ENCODE measurements at regions of chr17 and their contacts with region 1.

Region 1: DNA sequence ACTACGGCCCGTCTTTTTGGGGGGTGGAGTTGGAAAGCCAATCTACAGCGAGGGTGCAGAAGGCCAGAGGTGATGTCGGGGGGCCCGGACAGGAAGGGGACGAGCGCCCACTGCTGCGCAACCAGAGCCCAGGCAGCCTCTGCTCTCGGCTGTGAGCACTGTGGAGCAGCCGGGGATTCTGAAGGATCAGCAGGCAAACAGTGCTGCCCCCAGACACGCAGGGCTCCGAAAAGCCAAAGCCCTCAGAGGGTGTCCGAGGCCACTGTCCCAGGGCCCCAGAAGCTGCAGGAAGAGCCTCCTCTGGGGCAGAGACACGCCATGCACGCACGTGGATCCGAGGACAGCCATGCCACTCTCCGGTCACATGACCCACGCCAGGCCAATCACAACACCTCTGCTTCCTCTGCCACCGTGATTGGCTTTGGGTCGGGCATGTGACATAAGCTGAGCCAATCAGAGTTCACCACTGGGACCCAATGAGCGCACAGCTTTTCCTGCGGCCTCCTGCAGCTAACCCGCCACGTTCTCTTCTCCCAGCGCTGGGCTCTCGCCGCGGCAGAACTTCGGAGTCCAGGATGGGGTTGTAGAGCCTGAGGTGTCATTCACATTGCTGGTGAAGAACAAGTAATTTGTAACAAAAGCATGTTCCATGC is 40.7 kb downstream of the ACTG1 start:
- DNase-seq: peak; percentile 59
- H3K4me3 ChIP-seq: peak overlapping the region; percentile 49
- CTCF ChIP-seq: peak; percentile 69

Region 2: GRCh38 chr17:81309070-81309905 is 162.6 kb before region 1 on chr17:
- CTCF ChIA-PET with region 1: interaction called, 11 read pairs
- POLR2A ChIA-PET with region 1: no interaction called
- DNase-seq: no peak
- H3K4me3 ChIP-seq: no peak overlapping the region
- CTCF ChIP-seq: peak; percentile 64

Region 3: DNA sequence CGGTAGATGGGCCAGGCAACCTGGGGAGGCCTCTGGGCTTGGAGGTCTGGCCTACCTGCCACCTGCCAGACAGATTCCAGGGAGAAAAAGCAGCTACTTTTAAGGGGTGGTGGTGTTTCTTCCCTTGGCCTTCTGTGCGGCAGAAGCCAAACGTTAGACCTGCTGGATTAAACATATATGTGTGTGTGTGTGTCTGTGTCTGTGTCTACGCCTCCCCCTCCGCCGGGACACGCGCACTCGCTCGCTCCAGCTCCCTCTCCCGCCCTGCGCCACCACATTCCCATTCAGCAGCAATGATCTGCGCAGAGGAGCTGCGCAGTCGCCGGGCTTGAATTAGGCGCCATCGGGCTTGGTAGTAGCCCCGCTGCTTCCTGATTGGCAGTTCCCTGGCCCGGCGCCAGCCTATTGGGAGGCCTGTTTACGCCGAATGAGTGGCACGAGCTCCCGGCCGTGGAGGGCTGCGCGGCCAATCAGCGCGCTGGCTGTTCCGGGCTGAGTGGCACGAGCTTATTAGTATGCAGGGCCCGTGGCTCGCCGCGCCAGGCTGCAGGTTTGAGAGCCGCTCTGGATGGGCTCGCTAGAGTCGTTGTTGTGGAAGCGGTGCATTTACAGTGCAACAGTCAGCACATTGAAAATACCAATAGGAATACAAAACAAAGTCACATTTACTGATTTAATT is 76.9 kb before region 1 on chr17 and contains the start of gene BAHCC1:
- CTCF ChIA-PET with region 1: interaction called, 12 read pairs
- POLR2A ChIA-PET with region 1: no interaction called
- DNase-seq: peak; percentile 96
- H3K4me3 ChIP-seq: peak within 1 kb of the TSS; percentile 69
- CTCF ChIP-seq: peak; percentile 10

Measured in AG04449 (cell line).